Heart right ventricle (tissue), 16 donors: ENCODE measurements at regions of chr1 and their contacts with region 1.

Region 1: DNA sequence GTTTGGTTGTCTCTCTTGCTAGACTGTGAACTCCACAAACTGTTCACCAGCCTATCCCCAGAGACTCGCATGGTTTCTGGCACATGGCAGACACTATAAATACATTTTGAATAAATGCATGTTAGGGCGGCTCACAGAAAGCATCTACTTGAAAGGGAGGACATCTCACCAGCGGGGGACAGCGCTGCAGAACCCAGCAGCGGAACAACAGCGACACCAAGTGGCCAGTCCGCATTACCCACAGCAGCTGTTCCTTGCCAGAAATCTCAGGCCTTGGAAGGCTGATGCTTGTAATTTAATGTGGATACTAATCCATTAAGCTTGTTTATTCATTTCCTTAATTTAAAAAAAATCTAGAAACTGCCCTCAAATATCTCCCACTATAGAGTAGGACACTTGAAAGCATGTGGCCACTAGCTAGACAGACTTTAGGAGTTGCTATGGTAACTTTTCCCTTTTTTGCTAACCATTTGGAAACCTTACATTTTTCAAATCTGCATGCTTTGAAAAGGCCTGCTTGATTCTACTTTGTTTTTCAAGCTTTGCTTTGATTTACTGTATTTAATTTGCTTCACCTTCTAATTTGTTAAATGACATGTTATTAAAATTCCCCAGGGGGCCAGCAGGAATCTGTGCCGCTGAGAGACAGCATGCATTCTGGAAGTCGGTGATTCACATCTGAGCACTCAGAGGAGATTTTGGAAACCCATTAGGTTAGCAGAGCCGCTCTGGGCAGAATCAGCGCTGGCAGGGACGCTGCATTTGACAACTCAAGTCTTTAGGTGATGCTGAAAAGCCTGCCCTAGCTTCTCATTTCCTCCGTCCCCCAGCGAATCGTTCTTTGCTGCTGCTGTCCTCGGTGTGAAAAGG is 63.5 kb upstream of the SSX2IP start:
- DNase-seq: peak; percentile 24 to 62
- ATAC-seq: peak; percentile 71 to 93 (median 90)
- H3K4me3 ChIP-seq: no peak overlapping the region
- H3K27ac ChIP-seq: no peak overlapping the region
- H3K4me1 ChIP-seq: peaks cover 0 to 10% (median under 1%) of the 10 kb centered on the region in 9 donors
- H3K27me3 ChIP-seq: peaks cover 0 to 10% (median 0%) of the 10 kb centered on the region in 7 donors
- CTCF ChIP-seq: peak; percentile 72 to 96 (median 88)

Region 2: GRCh38 chr1:83931658-83932253 is 822.0 kb before region 1 on chr1:
- intact Hi-C with region 1: loop called in 5 of 10 experiments (anchors 5 to 10 kb)
- DNase-seq: peak in 1 of 2 donors; percentile 23
- ATAC-seq: peak in 7 of 8 donors; percentile 51 to 84 (median 71)
- H3K4me3 ChIP-seq: no peak overlapping the region
- H3K27ac ChIP-seq: no peak overlapping the region
- H3K4me1 ChIP-seq: no peaks in the 10 kb centered on the region
- H3K27me3 ChIP-seq: no peaks in the 10 kb centered on the region
- CTCF ChIP-seq: peak in 8 of 9 donors; percentile 59 to 82 (median 73)

Region 3: DNA sequence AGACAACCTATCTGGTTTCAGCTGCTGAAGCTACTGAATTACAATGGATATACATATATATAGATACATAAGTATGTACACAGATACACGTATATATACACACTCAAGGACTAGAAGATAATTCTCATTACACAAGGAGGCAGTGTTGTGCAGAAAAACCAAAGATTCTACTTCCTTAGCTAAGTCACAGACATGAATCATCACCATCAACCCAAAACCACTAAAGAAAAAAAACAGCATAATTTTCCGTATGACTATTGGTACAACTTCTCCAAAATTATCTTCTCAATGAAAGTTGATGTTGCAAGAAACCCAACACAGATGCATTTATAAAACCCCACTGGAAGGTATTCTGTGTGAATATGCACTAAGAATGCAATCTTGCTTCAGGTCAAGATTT is 311.5 kb before region 1 on chr1:
- intact Hi-C with region 1: loop called in 6 of 10 experiments (anchors 2 to 10 kb)
- DNase-seq: peak in 1 of 2 donors; percentile 13
- ATAC-seq: peak in 7 of 8 donors; percentile 58 to 89 (median 83)
- H3K4me3 ChIP-seq: no peak overlapping the region
- H3K27ac ChIP-seq: peak overlapping the region in 1 of 10 donors; percentile 31
- H3K4me1 ChIP-seq: peaks cover 0 to 24% (median 1%) of the 10 kb centered on the region in 9 donors
- H3K27me3 ChIP-seq: peaks cover 0 to 9% (median 0%) of the 10 kb centered on the region in 7 donors
- CTCF ChIP-seq: peak in 8 of 9 donors; percentile 18 to 67 (median 54)

Region 4: GRCh38 chr1:84632673-84633434 is 120.9 kb before region 1 on chr1:
- intact Hi-C with region 1: loop called in 5 of 10 experiments (anchors 5 to 10 kb)
- DNase-seq: no peak
- ATAC-seq: peak in 6 of 8 donors; percentile 35 to 74 (median 42)
- H3K4me3 ChIP-seq: no peak overlapping the region
- H3K27ac ChIP-seq: peak overlapping the region in 1 of 10 donors; percentile 6
- H3K4me1 ChIP-seq: peaks cover 0 to 9% (median 0%) of the 10 kb centered on the region in 9 donors
- H3K27me3 ChIP-seq: no peaks in the 10 kb centered on the region
- CTCF ChIP-seq: no peak

Region 5: DNA sequence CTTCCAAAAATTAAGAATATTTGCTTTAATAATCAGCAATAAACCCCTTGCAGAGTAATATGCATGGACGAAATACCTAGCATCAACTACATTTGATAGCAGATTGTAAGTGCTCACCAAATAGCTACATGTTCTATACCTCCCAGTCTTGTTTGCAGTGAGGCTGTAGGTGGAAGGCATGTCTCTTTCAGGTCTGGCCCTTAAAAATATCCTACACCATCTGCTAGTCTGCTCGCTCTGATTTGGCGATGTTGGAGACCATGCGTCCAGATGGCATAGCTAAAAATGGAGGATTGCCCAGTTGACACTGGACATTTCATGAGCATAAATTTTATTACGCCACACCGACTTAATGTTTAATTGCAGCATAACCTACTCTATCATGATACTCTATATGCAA is 110.6 kb before region 1 on chr1:
- intact Hi-C with region 1: no loop called
- DNase-seq: no peak
- ATAC-seq: no peak
- H3K4me3 ChIP-seq: no peak overlapping the region
- H3K27ac ChIP-seq: no peak overlapping the region
- H3K4me1 ChIP-seq: peaks cover 0 to 8% (median 0%) of the 10 kb centered on the region in 9 donors
- H3K27me3 ChIP-seq: no peaks in the 10 kb centered on the region
- CTCF ChIP-seq: no peak